Activated B cell treated with CpG ODN at 0.5 μM for 24 hours (primary cell): ENCODE measurements at regions of chr3 and their contacts with region 1.

Region 1: DNA sequence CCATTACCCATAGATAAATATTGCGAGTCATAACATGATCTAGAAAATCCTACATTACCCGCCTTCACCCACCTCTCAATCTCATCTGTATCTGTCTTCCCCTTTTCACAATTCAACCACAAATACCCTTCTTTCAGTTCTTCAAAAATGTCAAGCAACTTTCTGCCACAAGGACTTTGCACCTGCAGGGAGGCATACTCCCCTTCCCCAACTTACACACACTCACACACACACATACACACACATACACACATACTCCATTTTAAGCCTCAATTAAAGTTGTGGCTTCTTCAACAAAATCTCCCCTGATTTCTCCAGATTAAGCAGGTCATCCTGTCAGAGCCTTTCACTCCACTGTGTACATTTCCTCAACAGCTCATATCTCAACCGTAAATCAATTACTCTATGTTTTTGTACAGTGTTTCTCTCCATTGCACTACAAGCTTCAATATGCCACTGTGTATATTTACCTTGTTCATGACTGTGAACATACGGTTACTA is 33.1 kb upstream of the CCDC50 start:
- DNase-seq: no peak
- ATAC-seq: peak; percentile 77
- H3K4me3 Mint-ChIP-seq: no peak overlapping the region
- H3K27ac Mint-ChIP-seq: no peak overlapping the region
- H3K4me1 Mint-ChIP-seq: peaks cover 34% of the 10 kb centered on the region
- H3K27me3 Mint-ChIP-seq: no peaks in the 10 kb centered on the region
- CTCF ChIP-seq: no peak

Region 2: GRCh38 chr3:191244242-191244867 is 51.7 kb before region 1 on chr3:
- CTCF ChIA-PET with region 1: interaction called, 6 read pairs
- POLR2A ChIA-PET with region 1: interaction called, 9 read pairs
- intact Hi-C with region 1: loop called (anchors 1 kb)
- DNase-seq: no peak
- ATAC-seq: peak; percentile 26
- H3K4me3 Mint-ChIP-seq: no peak overlapping the region
- H3K27ac Mint-ChIP-seq: no peak overlapping the region
- H3K4me1 Mint-ChIP-seq: peaks cover 40% of the 10 kb centered on the region
- H3K27me3 Mint-ChIP-seq: no peaks in the 10 kb centered on the region
- CTCF ChIP-seq: peak; percentile 76

Region 3: GRCh38 chr3:191425322-191425734 is 129.2 kb after region 1 on chr3:
- CTCF ChIA-PET with region 1: no interaction called
- POLR2A ChIA-PET with region 1: no interaction called
- intact Hi-C with region 1: no loop called
- DNase-seq: no peak
- ATAC-seq: no peak
- H3K4me3 Mint-ChIP-seq: no peak overlapping the region
- H3K27ac Mint-ChIP-seq: no peak overlapping the region
- H3K4me1 Mint-ChIP-seq: no peaks in the 10 kb centered on the region
- H3K27me3 Mint-ChIP-seq: peaks cover 17% of the 10 kb centered on the region
- CTCF ChIP-seq: no peak

Region 4: GRCh38 chr3:191783039-191783438 is 486.9 kb after region 1 on chr3:
- CTCF ChIA-PET with region 1: no interaction called
- POLR2A ChIA-PET with region 1: no interaction called
- intact Hi-C with region 1: no loop called
- DNase-seq: no peak
- ATAC-seq: no peak
- H3K4me3 Mint-ChIP-seq: no peak overlapping the region
- H3K27ac Mint-ChIP-seq: no peak overlapping the region
- H3K4me1 Mint-ChIP-seq: no peaks in the 10 kb centered on the region
- H3K27me3 Mint-ChIP-seq: no peaks in the 10 kb centered on the region
- CTCF ChIP-seq: no peak